ENCODE measurements at regions of chr20 and their contacts with region 1.

Region 1: DNA sequence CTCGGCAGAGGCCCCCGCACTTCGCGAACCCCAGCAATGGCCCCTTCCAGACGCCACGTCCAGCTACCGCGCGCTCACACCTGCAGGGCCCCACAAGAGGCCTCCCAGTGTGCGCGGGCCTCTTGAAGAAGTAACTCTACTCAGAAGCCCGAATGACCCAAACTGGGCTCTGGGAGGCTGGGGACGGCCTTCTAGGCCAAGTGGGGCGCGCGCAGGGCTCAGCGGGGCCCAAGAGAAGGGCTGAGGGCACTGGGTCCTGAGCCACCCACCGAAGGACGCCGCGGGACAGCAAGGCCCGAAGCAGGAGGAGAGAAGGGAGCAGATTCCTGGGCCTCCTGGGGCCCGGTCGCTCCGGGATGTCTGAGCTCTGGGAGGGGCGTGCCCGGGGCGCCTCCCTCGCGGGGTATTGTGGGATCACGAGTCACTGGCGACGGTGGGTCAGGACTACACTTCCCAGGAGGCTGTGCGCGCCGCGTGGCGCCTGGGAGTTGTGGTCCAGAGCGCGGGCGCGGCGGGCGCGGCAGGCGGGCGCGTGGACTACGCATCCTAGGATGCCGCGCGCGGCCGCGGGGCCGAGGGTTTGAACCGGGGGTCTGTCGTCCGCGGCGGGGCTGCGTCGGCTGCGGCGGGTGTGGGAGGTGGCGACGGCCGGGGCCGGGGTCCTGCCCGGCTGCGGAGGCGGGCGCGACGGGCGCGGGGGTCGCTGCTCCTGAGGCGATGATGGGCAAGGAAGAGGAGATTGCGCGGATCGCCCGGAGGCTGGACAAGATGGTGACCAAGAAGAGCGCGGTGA is at the start of gene TCEA2:
- DNase-seq: peak; percentile 94
- H3K4me3 Mint-ChIP-seq: peak within 1 kb of the TSS; percentile 93
- H3K27ac Mint-ChIP-seq: peak within 1 kb of the TSS; percentile 95
- H3K4me1 Mint-ChIP-seq: peaks cover 56% of the 10 kb centered on the region
- H3K27me3 Mint-ChIP-seq: no peaks in the 10 kb centered on the region
- total RNA-seq, gene TCEA2: 33.8 TPM in 2 replicates

Region 2: DNA sequence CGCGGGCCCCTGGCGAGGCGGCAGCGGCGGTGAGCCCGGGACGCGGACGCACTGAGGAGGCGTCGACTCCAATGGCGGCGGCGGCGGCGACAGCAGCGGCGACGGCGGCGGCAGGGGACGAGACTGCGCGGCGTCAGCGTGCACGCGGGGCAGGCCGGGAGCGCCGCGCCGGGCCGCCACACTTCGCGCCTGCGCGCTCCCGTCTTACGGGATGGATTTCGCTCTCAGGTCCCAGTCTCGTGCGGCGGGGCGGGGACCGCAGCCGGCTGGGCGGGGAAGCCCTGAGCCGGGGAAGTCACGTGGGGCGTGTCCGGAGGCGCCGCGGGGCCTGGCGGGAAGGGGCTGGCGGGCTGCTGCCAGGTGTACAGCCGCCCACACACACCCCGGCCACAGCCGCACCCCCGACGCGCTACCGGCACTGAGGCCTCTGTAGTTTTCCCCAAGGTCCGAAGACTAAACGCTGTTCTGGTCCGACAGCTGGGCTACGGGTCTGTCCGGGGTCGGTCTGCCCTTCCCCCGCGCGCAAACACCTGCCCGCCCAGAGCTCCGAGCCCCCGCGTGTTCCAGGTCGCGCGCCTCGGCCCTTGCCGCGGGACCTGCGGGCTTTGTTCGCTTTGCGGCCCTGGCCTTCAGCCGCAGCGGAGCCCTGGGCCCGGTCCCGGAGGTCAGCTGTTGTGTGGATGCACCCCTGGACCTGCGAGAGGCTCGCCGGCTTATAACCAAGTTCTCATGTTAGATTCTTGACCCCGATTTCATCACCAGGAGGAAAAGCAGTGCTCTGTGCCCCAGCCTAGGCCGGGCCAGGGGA is 846.5 kb before region 1 on chr20 and contains the start of gene YTHDF1:
- intact Hi-C with region 1: loop called (anchors 5 kb)
- DNase-seq: peak; percentile 97
- H3K4me3 Mint-ChIP-seq: peak within 1 kb of the TSS; percentile 98
- H3K27ac Mint-ChIP-seq: peak within 1 kb of the TSS; percentile 89
- H3K4me1 Mint-ChIP-seq: peaks cover 47% of the 10 kb centered on the region
- H3K27me3 Mint-ChIP-seq: no peaks in the 10 kb centered on the region
- total RNA-seq, gene YTHDF1: 48.8 and 49.0 TPM in 2 replicates

Region 3: DNA sequence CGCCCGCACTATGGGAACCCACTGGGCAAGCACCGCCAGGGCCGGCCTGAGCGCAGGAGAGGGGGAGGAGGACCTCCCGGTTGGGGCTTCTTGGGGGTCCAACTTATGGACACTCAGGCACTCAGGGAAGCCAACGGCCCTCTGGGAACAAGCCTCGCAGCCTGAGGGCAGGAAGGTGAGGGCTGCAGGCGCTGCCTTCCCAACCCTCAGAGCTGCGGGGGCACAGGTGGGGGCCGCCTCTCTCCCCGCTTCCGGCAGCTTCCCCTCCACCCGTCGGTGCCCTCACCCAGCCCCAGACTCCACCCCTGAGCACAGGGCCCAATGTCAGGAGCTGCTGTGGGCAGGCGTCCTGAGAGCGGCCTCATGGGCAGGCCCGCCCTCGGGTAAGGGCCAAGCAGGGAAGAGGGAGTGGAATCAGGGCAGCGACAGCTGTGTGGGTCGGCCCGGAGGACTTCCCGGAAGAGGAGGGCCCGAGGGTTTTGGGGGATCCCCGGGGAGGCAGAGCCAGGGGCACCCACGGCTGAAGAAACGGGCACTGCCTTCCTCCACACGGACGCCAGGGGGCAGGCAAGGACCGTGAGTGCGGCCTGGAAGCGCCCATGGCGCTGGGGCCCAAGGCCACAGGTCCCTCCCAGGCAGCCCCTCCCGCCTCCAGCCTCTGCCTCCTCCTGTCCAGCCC is 525.1 kb before region 1 on chr20:
- intact Hi-C with region 1: loop called (anchors 1 kb)
- DNase-seq: peak; percentile 95
- H3K4me3 Mint-ChIP-seq: peak overlapping the region; percentile 68
- H3K27ac Mint-ChIP-seq: peak overlapping the region; percentile 90
- H3K4me1 Mint-ChIP-seq: no peaks in the 10 kb centered on the region
- H3K27me3 Mint-ChIP-seq: peaks cover 1% of the 10 kb centered on the region

Region 4: DNA sequence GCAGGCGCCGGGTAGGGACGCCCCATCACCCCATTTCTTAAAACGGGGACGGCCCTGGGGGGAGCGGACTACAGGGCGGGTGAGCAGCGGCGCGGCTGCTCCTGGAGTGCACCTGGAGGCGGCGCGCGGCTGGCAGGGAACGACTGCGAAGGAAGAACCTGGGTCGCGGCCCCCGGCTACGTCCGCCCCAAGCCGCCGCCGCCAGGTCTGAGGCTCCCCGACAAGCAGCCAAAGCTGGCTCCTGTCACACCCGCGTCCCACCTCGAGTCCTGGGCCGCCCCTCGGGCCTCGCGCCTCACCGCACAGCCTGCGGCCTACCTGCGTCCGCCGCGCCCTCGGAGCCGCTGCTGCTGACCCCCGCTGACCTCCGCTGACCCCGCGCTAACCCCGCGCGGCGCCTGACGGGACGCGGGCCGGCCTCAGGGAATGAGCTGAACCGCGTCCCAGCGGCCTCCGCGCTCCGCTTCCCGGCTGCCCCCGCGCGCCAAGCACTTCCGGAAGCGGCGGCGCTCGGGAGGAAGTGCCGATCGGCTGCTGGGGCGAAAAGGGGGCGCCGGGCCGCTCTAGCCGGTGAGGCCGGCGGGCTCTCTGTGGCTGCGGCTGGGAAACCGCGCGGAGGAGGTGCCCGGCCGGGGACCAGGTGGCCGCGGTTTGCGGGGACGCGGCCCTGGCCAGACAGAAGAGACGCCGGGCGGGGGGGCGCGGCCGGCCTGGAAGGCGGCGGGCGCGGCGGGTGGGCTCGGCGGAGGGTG is 355.1 kb before region 1 on chr20 and contains the starts of genes ARFRP1 and ZGPAT:
- intact Hi-C with region 1: loop called (anchors 1 kb)
- DNase-seq: peak; percentile 88
- H3K4me3 Mint-ChIP-seq: peak within 1 kb of the TSS; percentile 94
- H3K27ac Mint-ChIP-seq: peak within 1 kb of the TSS; percentile 86
- H3K4me1 Mint-ChIP-seq: peaks cover 31% of the 10 kb centered on the region
- H3K27me3 Mint-ChIP-seq: no peaks in the 10 kb centered on the region
- total RNA-seq, gene ARFRP1: 71.8 and 73.5 TPM in 2 replicates
- total RNA-seq, gene ZGPAT: 34.5 and 36.7 TPM in 2 replicates

Region 5: GRCh38 chr20:63889241-63890200 is 173.3 kb before region 1 on chr20:
- intact Hi-C with region 1: no loop called
- DNase-seq: no peak
- H3K4me3 Mint-ChIP-seq: no peak overlapping the region
- H3K27ac Mint-ChIP-seq: no peak overlapping the region
- H3K4me1 Mint-ChIP-seq: peaks cover 5% of the 10 kb centered on the region
- H3K27me3 Mint-ChIP-seq: peaks cover 1% of the 10 kb centered on the region

Region 6: GRCh38 chr20:63955827-63956663 is 106.7 kb before region 1 on chr20 and contains the start of gene UCKL1:
- intact Hi-C with region 1: loop called (anchors 1 kb)
- DNase-seq: peak; percentile 88
- H3K4me3 Mint-ChIP-seq: peak within 1 kb of the TSS; percentile 84
- H3K27ac Mint-ChIP-seq: peak within 1 kb of the TSS; percentile 93
- H3K4me1 Mint-ChIP-seq: peaks cover 19% of the 10 kb centered on the region
- H3K27me3 Mint-ChIP-seq: no peaks in the 10 kb centered on the region
- total RNA-seq, gene UCKL1: 48.7 and 49.3 TPM in 2 replicates

Region 7: GRCh38 chr20:64001607-64002011 is 61.2 kb before region 1 on chr20:
- intact Hi-C with region 1: no loop called
- DNase-seq: no peak
- H3K4me3 Mint-ChIP-seq: no peak overlapping the region
- H3K27ac Mint-ChIP-seq: no peak overlapping the region
- H3K4me1 Mint-ChIP-seq: no peaks in the 10 kb centered on the region
- H3K27me3 Mint-ChIP-seq: no peaks in the 10 kb centered on the region

Region 8: GRCh38 chr20:64079273-64080012 is 16.7 kb after region 1 on chr20 and contains the start of gene RGS19:
- intact Hi-C with region 1: loop called (anchors 1 kb)
- DNase-seq: peak; percentile 75
- H3K4me3 Mint-ChIP-seq: peak within 1 kb of the TSS; percentile 93
- H3K27ac Mint-ChIP-seq: peak within 1 kb of the TSS; percentile 83
- H3K4me1 Mint-ChIP-seq: peaks cover 24% of the 10 kb centered on the region
- H3K27me3 Mint-ChIP-seq: peaks cover 8% of the 10 kb centered on the region
- total RNA-seq, gene RGS19: 54.7 and 55.9 TPM in 2 replicates

Region 9: DNA sequence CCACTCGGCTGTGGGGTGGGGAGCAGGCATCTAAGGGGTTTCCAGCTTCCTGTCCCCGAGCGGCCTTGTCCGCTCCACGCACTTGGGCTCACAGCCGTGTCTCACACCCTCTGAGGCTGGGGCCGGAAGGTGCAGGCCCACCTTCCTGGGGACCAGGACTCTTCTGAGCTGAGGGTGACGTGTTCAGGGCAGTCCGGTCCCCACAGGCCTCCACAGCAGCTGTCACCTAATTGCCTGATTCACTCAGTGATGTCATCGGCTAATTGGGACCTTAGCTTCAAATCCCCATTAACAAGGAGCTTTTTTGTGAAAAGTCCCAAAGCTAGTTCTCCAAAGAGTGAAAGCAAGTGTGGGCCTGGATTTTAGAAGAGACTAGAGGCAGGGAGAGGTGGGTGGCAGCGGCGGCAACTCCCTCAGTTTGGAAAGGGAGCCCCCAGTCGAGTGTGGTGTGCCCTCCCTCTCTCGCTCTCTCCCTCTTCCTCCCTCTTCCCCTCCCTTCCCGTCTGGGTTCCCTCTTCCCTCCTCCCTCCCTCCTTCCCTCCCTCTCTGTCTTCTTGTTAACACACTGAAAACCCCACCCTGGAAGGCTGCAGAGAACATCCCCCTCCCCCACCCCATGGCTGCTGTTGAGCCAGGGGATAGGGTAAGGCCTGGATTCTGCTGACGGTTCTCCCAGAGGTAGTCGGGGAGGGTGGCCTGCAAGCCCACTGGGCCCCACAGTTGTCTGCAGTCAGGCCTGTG is 140.4 kb after region 1 on chr20:
- intact Hi-C with region 1: no loop called
- DNase-seq: no peak
- H3K4me3 Mint-ChIP-seq: no peak overlapping the region
- H3K27ac Mint-ChIP-seq: no peak overlapping the region
- H3K4me1 Mint-ChIP-seq: no peaks in the 10 kb centered on the region
- H3K27me3 Mint-ChIP-seq: no peaks in the 10 kb centered on the region

Measured in activated T-helper 1 cell treated with anti-CD3 and anti-CD28 coated beads, Interleukin-12 subunit alpha, Interleukin-12 subunit beta, Interleukin-2, Interleukin-4 antibody, amounts not matched to agents 30 ng/mL and 10 ng/mL and 1 ng/mL, durations not matched to agents 14 hours and 24 hours and 36 hours (primary cell).